IMR-90 (cell line): ENCODE measurements at regions of chr19 and their contacts with region 1.

Region 1: GRCh38 chr19:4528843-4529242 is 6.2 kb downstream of the PLIN5 start:
- DNase-seq: no peak
- ATAC-seq: no peak
- H3K4me3 ChIP-seq: no peak overlapping the region
- H3K27ac ChIP-seq: no peak overlapping the region
- H3K4me1 ChIP-seq: no peaks in the 10 kb centered on the region
- H3K27me3 ChIP-seq: peaks cover 24% of the 10 kb centered on the region
- CTCF ChIP-seq: no peak
- POLR2A ChIP-seq: no peak
- RAD21 ChIP-seq: no peak

Region 2: GRCh38 chr19:4518345-4519171 is 10.3 kb before region 1 on chr19 and contains the start of gene PLIN4:
- CTCF ChIA-PET with region 1: no interaction called
- POLR2A ChIA-PET with region 1: no interaction called
- dilution Hi-C with region 1: no loop called
- in situ Hi-C with region 1: no loop called
- intact Hi-C with region 1: loop called (anchors 1 kb)
- DNase-seq: peak; percentile 38
- ATAC-seq: peak; percentile 28; the same call in 1 of the 2 replicates
- H3K4me3 ChIP-seq: no peak within 1 kb of the TSS
- H3K27ac ChIP-seq: no peak within 1 kb of the TSS
- H3K4me1 ChIP-seq: peaks cover 9% of the 10 kb centered on the region
- H3K27me3 ChIP-seq: peaks cover 14% of the 10 kb centered on the region
- CTCF ChIP-seq: no peak
- POLR2A ChIP-seq: no peak
- RAD21 ChIP-seq: no peak
- total RNA-seq, gene PLIN4: under 0.01 TPM in 2 replicates